Calu3 (cell line): ENCODE measurements at regions of chr3 and their contacts with region 1.

Region 1: GRCh38 chr3:137013955-137014688 is 56.3 kb downstream of the IL20RB start:
- DNase-seq: peak; percentile 97
- H3K4me3 Mint-ChIP-seq: peak overlapping the region; percentile 68
- H3K27ac Mint-ChIP-seq: peak overlapping the region; percentile 34
- H3K4me1 Mint-ChIP-seq: peaks cover 14% of the 10 kb centered on the region
- H3K27me3 Mint-ChIP-seq: no peaks in the 10 kb centered on the region
- CTCF ChIP-seq: peak; percentile 97

Region 2: GRCh38 chr3:136075218-136075808 is 938.8 kb before region 1 on chr3:
- CTCF ChIA-PET with region 1: interaction called, 4 read pairs
- intact Hi-C with region 1: loop called (anchors 2 kb)
- DNase-seq: peak; percentile 81
- H3K4me3 Mint-ChIP-seq: no peak overlapping the region
- H3K27ac Mint-ChIP-seq: no peak overlapping the region
- H3K4me1 Mint-ChIP-seq: peaks cover 8% of the 10 kb centered on the region
- H3K27me3 Mint-ChIP-seq: no peaks in the 10 kb centered on the region
- CTCF ChIP-seq: peak; percentile 85

Region 3: GRCh38 chr3:136390574-136390973 is 623.5 kb before region 1 on chr3:
- CTCF ChIA-PET with region 1: interaction called, 25 read pairs
- intact Hi-C with region 1: loop called (anchors 1 kb)
- DNase-seq: no peak
- H3K4me3 Mint-ChIP-seq: no peak overlapping the region
- H3K27ac Mint-ChIP-seq: no peak overlapping the region
- H3K4me1 Mint-ChIP-seq: no peaks in the 10 kb centered on the region
- H3K27me3 Mint-ChIP-seq: no peaks in the 10 kb centered on the region
- CTCF ChIP-seq: no peak

Region 4: GRCh38 chr3:136861890-136862616 is 152.1 kb before region 1 on chr3 and contains the start of gene NCK1:
- CTCF ChIA-PET with region 1: interaction called, 26 read pairs
- intact Hi-C with region 1: loop called (anchors 2 kb)
- DNase-seq: peak; percentile 100
- H3K4me3 Mint-ChIP-seq: peak within 1 kb of the TSS; percentile 99
- H3K27ac Mint-ChIP-seq: peak within 1 kb of the TSS; percentile 89
- H3K4me1 Mint-ChIP-seq: peaks cover 47% of the 10 kb centered on the region
- H3K27me3 Mint-ChIP-seq: no peaks in the 10 kb centered on the region
- CTCF ChIP-seq: no peak
- total RNA-seq, gene NCK1: 108 and 127 TPM in 2 replicates

Region 5: DNA sequence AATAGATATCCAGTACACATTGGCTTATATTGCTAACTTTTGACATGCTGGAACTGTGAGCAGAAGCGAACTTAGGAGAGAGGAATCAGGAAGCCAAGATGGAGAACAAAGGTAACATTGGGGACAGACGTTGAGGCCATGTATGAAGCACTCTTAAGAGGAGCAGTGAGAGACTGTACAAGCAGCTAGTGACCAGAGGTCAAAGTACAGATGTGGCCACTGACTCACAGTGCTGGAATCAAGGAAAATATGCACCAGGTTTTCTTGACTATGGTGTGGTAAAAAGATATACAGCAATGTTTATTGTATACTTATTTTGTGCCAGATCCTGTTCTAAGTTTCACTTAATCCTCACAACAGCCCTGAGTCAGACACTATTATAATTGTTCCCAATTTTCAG is 58.3 kb before region 1 on chr3:
- CTCF ChIA-PET with region 1: interaction called, 14 read pairs
- intact Hi-C with region 1: no loop called
- DNase-seq: peak; percentile 79
- H3K4me3 Mint-ChIP-seq: peak overlapping the region; percentile 47
- H3K27ac Mint-ChIP-seq: peak overlapping the region; percentile 89
- H3K4me1 Mint-ChIP-seq: peaks cover 89% of the 10 kb centered on the region
- H3K27me3 Mint-ChIP-seq: no peaks in the 10 kb centered on the region
- CTCF ChIP-seq: no peak

Region 6: DNA sequence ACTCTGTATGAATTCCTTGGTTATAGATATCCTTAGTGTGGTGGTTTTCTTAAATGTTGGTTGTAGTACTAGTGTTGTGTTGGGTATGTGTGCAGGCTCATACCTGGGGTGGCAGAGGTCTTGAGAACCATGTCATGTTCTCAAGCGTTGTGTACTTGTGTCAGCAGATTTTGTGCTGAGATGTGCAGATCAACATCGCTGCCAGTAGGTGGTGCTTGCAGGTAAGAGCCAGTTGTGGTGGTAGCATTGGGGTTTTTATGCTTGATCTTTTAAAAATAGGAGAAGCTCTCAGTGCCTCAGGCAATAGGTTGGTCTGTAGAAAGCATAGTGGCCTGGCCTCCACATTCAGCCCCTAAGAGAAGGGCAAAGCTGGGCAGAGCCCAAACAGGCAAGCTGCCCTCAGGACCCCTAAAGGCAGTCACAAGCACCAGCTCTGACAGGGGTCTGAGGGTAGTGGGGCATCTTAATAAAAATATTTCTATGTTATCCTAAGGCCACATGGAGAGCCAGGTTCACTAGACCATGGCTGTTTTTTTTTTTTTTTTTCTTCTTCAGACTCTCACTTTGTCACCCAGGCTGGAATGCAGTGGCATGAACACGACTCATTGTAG is 107.7 kb after region 1 on chr3:
- CTCF ChIA-PET with region 1: no interaction called
- intact Hi-C with region 1: no loop called
- DNase-seq: peak; percentile 65
- H3K4me3 Mint-ChIP-seq: no peak overlapping the region
- H3K27ac Mint-ChIP-seq: no peak overlapping the region
- H3K4me1 Mint-ChIP-seq: no peaks in the 10 kb centered on the region
- H3K27me3 Mint-ChIP-seq: peaks cover 38% of the 10 kb centered on the region
- CTCF ChIP-seq: peak; percentile 85